Cardiac septum (tissue), 1 donor: ENCODE measurements at regions of chr12 and their contacts with region 1.

Region 1: DNA sequence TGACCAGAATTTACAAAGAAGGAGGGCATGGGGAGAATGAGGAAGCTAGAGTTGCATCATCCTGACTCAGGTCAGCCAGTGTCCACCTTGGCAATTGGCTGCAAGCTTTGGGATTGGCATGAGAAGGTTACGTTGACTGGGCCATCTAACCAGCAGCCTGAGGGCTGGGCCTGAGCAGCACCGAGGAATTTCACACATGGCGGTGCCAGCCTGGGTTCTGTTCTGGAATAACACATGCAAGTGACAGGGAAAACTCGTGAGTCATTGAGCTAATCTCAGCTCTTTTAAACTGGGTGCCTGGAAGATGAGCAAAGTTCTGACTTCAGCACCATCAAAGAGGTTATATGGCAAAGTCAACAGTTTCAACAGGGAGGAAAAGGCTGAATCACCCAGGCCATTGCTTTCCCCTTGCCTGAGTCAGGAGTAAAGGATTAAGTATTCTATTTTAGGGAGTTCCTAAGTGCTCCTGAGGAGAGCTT is 543.2 kb upstream of the TBX3 start:
- DNase-seq: no peak

Region 2: GRCh38 chr12:115174920-115175319 is 52.3 kb before region 1 on chr12:
- intact Hi-C with region 1: no loop called
- DNase-seq: no peak

Region 3: GRCh38 chr12:115337693-115338543 is 110.7 kb after region 1 on chr12:
- intact Hi-C with region 1: loop called (anchors 5 kb)
- DNase-seq: no peak